ENCODE measurements at regions of chr3 and their contacts with region 1.

Region 1: GRCh38 chr3:168511428-168512014 is 415.8 kb upstream of the GOLIM4 start:
- DNase-seq: no peak
- CTCF ChIP-seq: peak; percentile 42

Region 2: GRCh38 chr3:168233001-168233400 is 278.5 kb before region 1 on chr3:
- in situ Hi-C with region 1: no loop called
- DNase-seq: no peak
- CTCF ChIP-seq: no peak

Region 3: GRCh38 chr3:168615493-168616020 is 104.0 kb after region 1 on chr3:
- in situ Hi-C with region 1: loop called (anchors 10 kb)
- DNase-seq: no peak
- CTCF ChIP-seq: no peak

Region 4: GRCh38 chr3:168847291-168847883 is 335.9 kb after region 1 on chr3:
- in situ Hi-C with region 1: loop called (anchors 10 kb)
- DNase-seq: peak; percentile 16
- CTCF ChIP-seq: peak; percentile 30

Measured in GM13976 (cell line).